Left lung (tissue), 14 donors: ENCODE measurements at regions of chr19 and their contacts with region 1.

Region 1: GRCh38 chr19:2648528-2648937 is 54.0 kb downstream of the GNG7 start:
- DNase-seq: peak in 3 of 4 donors; percentile 51 to 89 (median 75)
- ATAC-seq: peak; percentile 100
- H3K4me3 ChIP-seq: no peak overlapping the region
- H3K27ac ChIP-seq: no peak overlapping the region
- H3K4me1 ChIP-seq: no peaks in the 10 kb centered on the region
- H3K27me3 ChIP-seq: no peaks in the 10 kb centered on the region
- CTCF ChIP-seq: peak; percentile 69 to 88

Region 2: GRCh38 chr19:2610637-2611482 is 37.7 kb before region 1 on chr19:
- intact Hi-C with region 1: no loop called
- DNase-seq: peak; percentile 81 to 99 (median 92)
- ATAC-seq: peak; percentile 97
- H3K4me3 ChIP-seq: peak overlapping the region; percentile 24 to 43
- H3K27ac ChIP-seq: peak overlapping the region; percentile 82 to 85
- H3K4me1 ChIP-seq: peaks cover 5 to 53% of the 10 kb centered on the region in 2 donors
- H3K27me3 ChIP-seq: no peaks in the 10 kb centered on the region
- CTCF ChIP-seq: peak; percentile 95 to 98

Region 3: GRCh38 chr19:2702162-2703076 is 53.9 kb after region 1 on chr19 and contains the start of gene GNG7:
- intact Hi-C with region 1: no loop called
- DNase-seq: peak; percentile 62 to 97 (median 91)
- ATAC-seq: peak; percentile 100
- H3K4me3 ChIP-seq: peak within 1 kb of the TSS; percentile 38 to 40
- H3K27ac ChIP-seq: no peak within 1 kb of the TSS
- H3K4me1 ChIP-seq: peaks cover 0 to 12% of the 10 kb centered on the region in 2 donors
- H3K27me3 ChIP-seq: peaks cover 0 to 5% of the 10 kb centered on the region in 2 donors
- CTCF ChIP-seq: no peak
- polyA plus RNA-seq, gene GNG7: 4.7 to 7.1 (median 5.8) TPM

Region 4: DNA sequence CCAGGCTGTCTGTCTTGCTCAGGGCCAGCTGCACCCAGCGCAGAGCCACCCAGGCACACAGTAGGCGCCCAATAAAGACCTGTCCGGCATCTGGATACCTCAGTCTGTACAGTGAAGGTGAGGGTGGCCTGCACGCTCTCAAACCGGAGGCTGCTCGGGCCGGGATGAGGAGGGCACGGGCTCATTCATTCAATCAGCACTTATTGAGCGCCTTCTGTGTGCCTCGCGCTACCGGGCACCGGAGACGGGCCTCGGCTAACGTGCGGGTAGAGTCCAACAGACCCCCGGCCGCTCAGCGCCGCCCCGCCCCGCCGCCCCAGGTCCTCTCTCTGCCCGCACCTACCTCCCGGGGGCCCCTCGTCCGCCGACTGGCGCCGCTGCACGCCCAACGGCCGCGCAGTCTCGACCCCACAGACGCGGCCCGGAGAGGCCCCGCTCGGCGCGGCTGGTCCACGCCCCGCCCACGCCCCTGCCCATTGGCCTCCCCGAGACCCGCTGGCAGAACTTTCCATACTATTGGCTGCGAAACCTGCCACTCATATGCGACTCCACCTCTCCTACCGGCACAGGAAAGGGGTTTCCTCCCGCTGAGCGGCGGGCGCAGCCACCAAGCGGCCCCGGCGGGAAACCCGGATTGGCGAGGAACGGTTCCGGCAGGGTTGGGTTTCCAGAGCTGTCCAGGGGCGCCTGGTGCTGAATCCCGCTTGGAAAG is 91.2 kb after region 1 on chr19 and contains the start of gene SLC39A3:
- intact Hi-C with region 1: loop called (anchors 5 to 10 kb)
- DNase-seq: peak; percentile 94 to 99 (median 96)
- ATAC-seq: peak; percentile 100
- H3K4me3 ChIP-seq: peak within 1 kb of the TSS; percentile 63 to 99
- H3K27ac ChIP-seq: peak within 1 kb of the TSS in 1 of 2 donors; percentile 65
- H3K4me1 ChIP-seq: peaks cover 5 to 30% of the 10 kb centered on the region in 2 donors
- H3K27me3 ChIP-seq: peaks cover 0 to 36% of the 10 kb centered on the region in 2 donors
- CTCF ChIP-seq: peak in 1 of 2 donors; percentile 19
- polyA plus RNA-seq, gene SLC39A3: 18.3 to 25.3 (median 21.2) TPM

Region 5: DNA sequence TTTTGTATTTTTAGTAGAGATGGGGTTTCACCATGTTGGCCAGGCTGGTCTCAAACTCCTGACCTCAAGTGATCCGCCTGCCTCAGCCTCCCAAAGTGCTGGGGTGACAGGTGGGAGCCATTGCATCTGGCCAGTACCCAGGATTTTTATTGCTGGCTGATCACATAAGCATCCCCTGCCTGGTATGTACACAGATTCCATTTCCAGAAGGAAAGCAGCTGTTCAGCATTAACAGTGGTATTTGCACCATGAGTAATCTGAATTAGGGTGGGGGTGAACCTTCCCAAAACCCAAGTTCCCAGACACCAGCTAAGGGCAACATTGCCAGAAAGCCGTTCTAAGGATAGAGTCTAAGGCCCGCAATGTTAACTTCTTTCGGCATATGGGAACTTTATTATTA is 200.1 kb after region 1 on chr19:
- intact Hi-C with region 1: no loop called
- DNase-seq: no peak
- ATAC-seq: no peak
- H3K4me3 ChIP-seq: no peak overlapping the region
- H3K27ac ChIP-seq: no peak overlapping the region
- H3K4me1 ChIP-seq: peaks cover 0 to 4% of the 10 kb centered on the region in 2 donors
- H3K27me3 ChIP-seq: no peaks in the 10 kb centered on the region
- CTCF ChIP-seq: no peak

Region 6: DNA sequence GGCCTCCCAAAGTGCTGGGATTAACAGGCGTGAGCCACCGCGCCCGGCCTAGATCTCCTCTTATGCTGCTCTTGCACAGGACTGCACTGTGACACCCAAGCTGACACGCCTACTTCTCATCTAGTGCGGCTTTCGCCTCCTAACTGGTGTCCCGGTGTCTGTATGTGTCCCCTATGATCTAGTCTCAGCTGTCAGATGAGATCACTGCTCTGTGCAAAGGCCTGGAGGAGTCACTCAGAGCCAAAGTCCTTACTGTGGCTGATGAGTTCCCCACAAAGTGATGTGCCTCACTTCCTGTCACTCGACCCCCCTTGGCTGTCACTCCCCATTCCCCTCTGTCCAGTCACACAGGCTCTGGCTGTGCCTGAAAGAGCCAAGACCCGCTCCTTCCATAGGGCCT is 221.1 kb after region 1 on chr19:
- intact Hi-C with region 1: loop called in 1 of 2 experiments (anchors 10 kb)
- DNase-seq: no peak
- ATAC-seq: no peak
- H3K4me3 ChIP-seq: no peak overlapping the region
- H3K27ac ChIP-seq: no peak overlapping the region
- H3K4me1 ChIP-seq: no peaks in the 10 kb centered on the region
- H3K27me3 ChIP-seq: no peaks in the 10 kb centered on the region
- CTCF ChIP-seq: no peak